IMR-90 (cell line): ENCODE measurements at regions of chr5 and their contacts with region 1.

Region 1: DNA sequence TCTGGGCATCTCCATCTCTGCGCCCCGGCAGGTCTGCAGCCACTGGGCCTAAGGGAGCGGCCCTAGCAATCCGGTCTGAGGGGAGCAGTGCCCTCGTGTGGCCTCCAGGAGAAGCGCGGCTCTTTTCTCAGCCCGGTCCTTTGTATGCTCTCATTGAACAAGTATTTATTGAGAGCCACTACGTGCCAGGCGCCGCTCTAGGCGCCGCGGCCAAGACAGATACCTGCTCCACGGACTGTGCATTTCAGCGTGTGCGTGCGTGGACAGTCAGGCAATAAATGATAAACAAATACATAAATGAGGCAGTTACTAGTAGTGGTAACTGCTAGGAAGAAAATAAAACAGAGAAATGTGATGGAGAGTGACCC is 2.3 kb upstream of the SLC4A9 start:
- DNase-seq: peak; percentile 83
- ATAC-seq: peak; percentile 99
- H3K4me3 ChIP-seq: peak overlapping the region; percentile 5; the same call in 1 of the 2 replicates
- H3K27ac ChIP-seq: no peak overlapping the region
- H3K4me1 ChIP-seq: no peaks in the 10 kb centered on the region
- H3K27me3 ChIP-seq: no peaks in the 10 kb centered on the region; the same call in 1 of the 2 replicates
- CTCF ChIP-seq: peak; percentile 96
- POLR2A ChIP-seq: no peak
- RAD21 ChIP-seq: peak; percentile 87

Region 2: GRCh38 chr5:140107312-140108083 is 250.2 kb before region 1 on chr5:
- CTCF ChIA-PET with region 1: no interaction called
- POLR2A ChIA-PET with region 1: no interaction called
- dilution Hi-C with region 1: no loop called
- in situ Hi-C with region 1: no loop called
- intact Hi-C with region 1: no loop called
- DNase-seq: peak; percentile 93
- ATAC-seq: peak; percentile 96
- H3K4me3 ChIP-seq: peak overlapping the region; percentile 74
- H3K27ac ChIP-seq: peak overlapping the region; percentile 97
- H3K4me1 ChIP-seq: peaks cover 7% of the 10 kb centered on the region
- H3K27me3 ChIP-seq: peaks cover 2% of the 10 kb centered on the region
- CTCF ChIP-seq: peak; percentile 29; the same call in 1 of the 2 replicates
- POLR2A ChIP-seq: peak; percentile 69; the same call in 1 of the 2 replicates
- RAD21 ChIP-seq: no peak; the same call in 1 of the 2 replicates

Region 3: GRCh38 chr5:140174465-140175366 is 183.0 kb before region 1 on chr5 and contains the start of gene CYSTM1:
- CTCF ChIA-PET with region 1: no interaction called
- POLR2A ChIA-PET with region 1: no interaction called
- dilution Hi-C with region 1: no loop called
- in situ Hi-C with region 1: no loop called
- intact Hi-C with region 1: loop called (anchors 2 kb)
- DNase-seq: peak; percentile 91
- ATAC-seq: peak; percentile 87
- H3K4me3 ChIP-seq: peak within 1 kb of the TSS; percentile 68
- H3K27ac ChIP-seq: peak within 1 kb of the TSS; percentile 11
- H3K4me1 ChIP-seq: peaks cover 8% of the 10 kb centered on the region; the same call in 1 of the 2 replicates
- H3K27me3 ChIP-seq: no peaks in the 10 kb centered on the region
- CTCF ChIP-seq: no peak
- POLR2A ChIP-seq: no peak
- RAD21 ChIP-seq: no peak
- total RNA-seq, gene CYSTM1: 6.7 and 7.3 TPM in 2 replicates

Region 4: DNA sequence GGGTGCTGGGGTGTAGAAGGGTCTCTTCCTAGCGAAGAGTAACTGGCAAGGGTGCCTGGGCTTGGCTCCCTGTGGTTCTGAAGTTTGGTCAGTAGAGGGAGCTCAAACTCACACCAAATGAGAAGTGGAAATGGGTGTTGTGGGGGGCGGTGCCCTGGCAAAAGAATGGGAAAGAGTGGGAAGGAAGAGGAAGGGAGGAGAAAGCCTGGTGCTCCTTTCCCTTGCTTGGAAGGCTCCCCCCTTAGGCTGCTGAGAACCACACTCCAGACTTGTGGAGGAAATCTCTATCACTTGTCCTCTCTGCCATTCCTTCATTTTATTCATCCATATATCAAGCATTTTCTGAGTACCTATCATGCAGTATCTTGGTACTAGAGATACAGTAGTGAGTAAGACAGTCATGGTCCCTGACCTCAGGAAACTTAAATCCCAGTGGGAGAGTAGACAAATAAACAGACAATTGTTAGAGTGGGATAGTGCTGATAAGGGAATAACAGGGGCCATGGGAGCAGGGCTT is 15.3 kb after region 1 on chr5:
- CTCF ChIA-PET with region 1: interaction called, 13 read pairs
- POLR2A ChIA-PET with region 1: no interaction called
- dilution Hi-C with region 1: no loop called
- in situ Hi-C with region 1: no loop called
- intact Hi-C with region 1: no loop called
- DNase-seq: peak; percentile 69
- ATAC-seq: peak; percentile 99
- H3K4me3 ChIP-seq: no peak overlapping the region
- H3K27ac ChIP-seq: no peak overlapping the region
- H3K4me1 ChIP-seq: no peaks in the 10 kb centered on the region
- H3K27me3 ChIP-seq: peaks cover 2% of the 10 kb centered on the region; the same call in 1 of the 2 replicates
- CTCF ChIP-seq: peak; percentile 65
- POLR2A ChIP-seq: no peak
- RAD21 ChIP-seq: peak; percentile 72